MCF 10A (cell line): ENCODE measurements at regions of chr2 and their contacts with region 1.

Region 1: GRCh38 chr2:137838255-137839092 is 125.8 kb upstream of the HNMT start:
- DNase-seq: peak; percentile 57
- H3K4me3 Mint-ChIP-seq: no peak overlapping the region
- H3K27ac Mint-ChIP-seq: no peak overlapping the region
- H3K4me1 Mint-ChIP-seq: no peaks in the 10 kb centered on the region
- H3K27me3 Mint-ChIP-seq: no peaks in the 10 kb centered on the region
- CTCF ChIP-seq: peak; percentile 57

Region 2: DNA sequence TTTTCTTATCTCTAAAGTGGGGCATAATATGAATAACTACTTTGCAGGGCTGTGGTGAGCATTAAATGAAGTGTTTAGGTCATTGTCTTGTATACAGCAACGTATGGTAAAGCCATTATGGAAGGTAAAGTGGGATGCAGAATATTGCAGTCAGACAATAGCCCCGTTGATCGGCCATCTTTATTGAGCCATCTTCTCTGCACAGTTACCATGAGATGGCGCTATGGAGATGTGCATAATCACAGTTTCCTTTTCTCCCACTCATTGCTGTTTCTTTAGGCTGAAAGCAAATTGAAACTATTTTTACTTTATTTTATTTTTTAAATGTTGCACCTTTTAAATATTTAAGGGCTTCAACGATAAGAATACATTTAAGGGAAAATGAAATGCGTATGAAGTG is 964.2 kb before region 1 on chr2:
- CTCF ChIA-PET with region 1: no interaction called
- POLR2A ChIA-PET with region 1: no interaction called
- intact Hi-C with region 1: loop called (anchors 1 kb)
- DNase-seq: peak; percentile 55
- H3K4me3 Mint-ChIP-seq: no peak overlapping the region
- H3K27ac Mint-ChIP-seq: no peak overlapping the region
- H3K4me1 Mint-ChIP-seq: no peaks in the 10 kb centered on the region
- H3K27me3 Mint-ChIP-seq: peaks cover 19% of the 10 kb centered on the region
- CTCF ChIP-seq: peak; percentile 43

Region 3: GRCh38 chr2:136932700-136933099 is 905.8 kb before region 1 on chr2:
- CTCF ChIA-PET with region 1: interaction called, 18 read pairs
- POLR2A ChIA-PET with region 1: no interaction called
- intact Hi-C with region 1: loop called (anchors 1 kb)
- DNase-seq: peak; percentile 56
- H3K4me3 Mint-ChIP-seq: no peak overlapping the region
- H3K27ac Mint-ChIP-seq: no peak overlapping the region
- H3K4me1 Mint-ChIP-seq: no peaks in the 10 kb centered on the region
- H3K27me3 Mint-ChIP-seq: no peaks in the 10 kb centered on the region
- CTCF ChIP-seq: peak; percentile 64

Region 4: GRCh38 chr2:137467246-137467862 is 371.1 kb before region 1 on chr2:
- CTCF ChIA-PET with region 1: interaction called, 4 read pairs
- POLR2A ChIA-PET with region 1: no interaction called
- intact Hi-C with region 1: loop called (anchors 1 kb)
- DNase-seq: peak; percentile 73
- H3K4me3 Mint-ChIP-seq: no peak overlapping the region
- H3K27ac Mint-ChIP-seq: no peak overlapping the region
- H3K4me1 Mint-ChIP-seq: no peaks in the 10 kb centered on the region
- H3K27me3 Mint-ChIP-seq: no peaks in the 10 kb centered on the region
- CTCF ChIP-seq: peak; percentile 60

Region 5: DNA sequence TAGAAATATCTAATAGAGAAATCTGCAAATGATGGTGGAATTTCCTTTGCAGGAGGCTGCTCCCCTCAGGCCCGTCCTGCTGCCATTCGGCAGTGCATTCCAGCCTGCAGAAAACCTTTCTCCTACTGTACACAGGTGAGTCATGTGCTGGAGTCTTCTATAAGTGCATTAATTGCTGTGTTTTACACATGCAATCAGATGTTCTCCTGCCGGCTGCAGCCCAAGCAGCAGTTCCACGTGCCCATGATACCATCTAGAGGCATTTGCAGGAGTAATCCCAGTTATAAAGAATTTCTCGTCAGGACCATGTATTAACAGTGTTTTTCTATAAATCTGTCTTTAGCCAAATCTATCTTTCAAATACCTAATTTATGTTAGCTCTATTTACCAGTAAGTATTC is 178.9 kb before region 1 on chr2:
- CTCF ChIA-PET with region 1: interaction called, 8 read pairs
- POLR2A ChIA-PET with region 1: no interaction called
- intact Hi-C with region 1: loop called (anchors 10 kb)
- DNase-seq: peak; percentile 68
- H3K4me3 Mint-ChIP-seq: no peak overlapping the region
- H3K27ac Mint-ChIP-seq: no peak overlapping the region
- H3K4me1 Mint-ChIP-seq: no peaks in the 10 kb centered on the region
- H3K27me3 Mint-ChIP-seq: no peaks in the 10 kb centered on the region
- CTCF ChIP-seq: peak; percentile 53

Region 6: DNA sequence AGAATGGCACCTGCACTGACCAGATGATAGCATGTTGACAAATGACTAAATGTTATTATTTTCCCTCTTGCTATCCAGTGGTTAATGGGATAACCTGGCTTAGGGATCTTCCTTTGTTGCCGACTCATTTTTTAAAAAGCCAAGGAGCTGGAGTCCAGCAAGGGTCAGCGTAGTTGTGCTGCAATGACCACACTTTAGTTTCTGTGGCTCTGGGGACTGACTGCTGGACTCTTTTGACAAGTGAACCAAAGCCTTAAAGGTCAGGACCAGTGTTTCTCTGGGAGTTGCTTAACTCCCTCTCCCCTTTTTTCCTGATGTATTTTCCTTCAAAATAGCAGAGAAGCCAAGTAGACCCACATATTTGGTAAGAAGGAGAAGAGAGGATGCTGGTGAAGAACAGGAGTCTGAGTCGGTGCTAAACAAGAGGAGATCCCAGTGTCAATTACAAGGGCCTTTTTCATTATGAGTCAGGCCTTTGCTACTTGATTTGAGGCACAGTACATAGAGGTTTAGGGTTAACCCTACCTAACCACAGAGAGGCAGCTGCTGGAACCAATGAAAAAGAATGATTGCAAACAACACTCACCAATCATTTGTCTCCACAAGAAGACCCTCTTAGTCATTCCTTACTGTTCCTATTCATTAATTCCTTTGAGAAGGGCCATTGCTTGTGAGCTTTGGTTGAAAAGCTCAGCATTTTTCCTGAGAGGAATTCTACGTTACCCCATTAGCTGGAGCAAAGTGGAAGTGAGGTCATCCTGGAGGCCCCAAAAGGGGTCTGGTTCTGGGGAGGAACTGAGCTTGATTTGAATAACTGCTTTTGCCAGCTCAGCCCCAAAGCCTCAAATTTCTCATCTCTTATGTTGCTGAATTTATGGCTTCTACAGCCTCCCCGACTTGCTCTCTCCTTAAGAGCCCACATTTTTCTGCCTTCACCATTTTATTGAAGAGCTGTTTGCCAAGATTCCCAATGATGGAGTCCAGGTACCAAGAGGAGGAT is 11.8 kb before region 1 on chr2:
- CTCF ChIA-PET with region 1: interaction called, 31 read pairs
- POLR2A ChIA-PET with region 1: no interaction called
- intact Hi-C with region 1: no loop called
- DNase-seq: no peak
- H3K4me3 Mint-ChIP-seq: no peak overlapping the region
- H3K27ac Mint-ChIP-seq: no peak overlapping the region
- H3K4me1 Mint-ChIP-seq: peaks cover 5% of the 10 kb centered on the region
- H3K27me3 Mint-ChIP-seq: peaks cover 3% of the 10 kb centered on the region
- CTCF ChIP-seq: no peak

Region 7: DNA sequence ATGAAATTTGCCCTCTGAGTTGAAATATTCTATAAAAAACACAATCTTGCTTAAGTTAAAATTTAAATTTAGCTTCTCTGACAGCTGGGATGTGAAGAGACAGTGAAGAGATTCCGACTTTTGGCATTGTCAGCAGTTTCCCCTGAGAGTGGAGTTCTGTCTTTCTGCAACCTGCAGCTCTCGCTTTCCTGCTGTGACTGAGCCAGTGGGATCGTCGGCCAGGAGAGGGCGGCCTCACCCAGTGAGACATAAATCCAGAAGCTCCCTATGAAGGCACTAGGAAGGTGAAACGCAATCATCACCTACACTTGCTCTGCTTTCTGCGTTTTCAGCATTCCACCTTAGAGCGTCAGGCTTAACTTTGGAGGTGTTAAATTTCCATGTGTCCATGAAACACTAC is 50.4 kb after region 1 on chr2:
- CTCF ChIA-PET with region 1: no interaction called
- POLR2A ChIA-PET with region 1: no interaction called
- intact Hi-C with region 1: no loop called
- DNase-seq: peak; percentile 53
- H3K4me3 Mint-ChIP-seq: no peak overlapping the region
- H3K27ac Mint-ChIP-seq: no peak overlapping the region
- H3K4me1 Mint-ChIP-seq: peaks cover 10% of the 10 kb centered on the region
- H3K27me3 Mint-ChIP-seq: no peaks in the 10 kb centered on the region
- CTCF ChIP-seq: peak; percentile 55

Region 8: DNA sequence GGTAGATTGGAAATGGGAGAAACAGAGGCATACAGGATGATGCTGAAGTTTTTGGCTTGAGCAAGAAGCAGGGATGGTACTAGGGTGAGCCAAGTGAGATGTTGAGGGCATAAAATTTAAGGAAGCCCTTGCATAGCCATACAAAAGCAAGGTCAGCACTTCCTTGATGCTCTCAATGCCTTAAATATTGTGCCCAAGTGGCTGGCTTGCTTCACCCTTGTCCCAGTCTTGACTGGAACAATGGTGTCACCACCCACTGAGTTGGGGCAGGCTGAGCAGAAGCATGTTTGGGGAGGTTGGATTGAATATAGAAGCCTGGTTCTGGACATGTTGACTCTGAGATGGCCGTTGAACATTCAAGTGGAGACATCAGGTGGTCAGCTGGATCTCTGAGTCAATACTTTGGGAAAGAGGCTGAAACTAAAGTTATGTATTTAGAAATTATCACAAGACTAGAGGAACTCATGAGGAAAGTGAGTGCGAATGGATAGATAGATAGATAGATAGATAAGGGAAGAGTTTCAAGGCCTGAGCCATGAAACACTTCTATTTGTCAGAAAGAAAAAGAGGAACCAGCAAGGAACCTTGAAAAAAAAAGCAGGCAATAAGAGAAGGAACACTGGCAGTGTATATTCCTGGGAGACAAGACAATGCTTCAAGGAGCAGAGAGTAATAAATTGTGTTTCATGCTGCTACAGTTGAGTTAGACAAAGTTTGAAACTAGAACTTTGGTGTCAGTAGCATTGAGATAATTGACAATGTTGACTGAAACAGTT is 82.8 kb after region 1 on chr2:
- CTCF ChIA-PET with region 1: no interaction called
- POLR2A ChIA-PET with region 1: no interaction called
- intact Hi-C with region 1: no loop called
- DNase-seq: no peak
- H3K4me3 Mint-ChIP-seq: no peak overlapping the region
- H3K27ac Mint-ChIP-seq: no peak overlapping the region
- H3K4me1 Mint-ChIP-seq: no peaks in the 10 kb centered on the region
- H3K27me3 Mint-ChIP-seq: no peaks in the 10 kb centered on the region
- CTCF ChIP-seq: no peak